ENCODE measurements at regions of chr15 and their contacts with region 1.

Region 1: GRCh38 chr15:29821416-29822131 is 694 bp downstream of the TJP1 start:
- DNase-seq: peak in 5 of 9 experiments; percentile 13 to 48 (median 27)
- ATAC-seq: peak; percentile 44
- H3K4me3 ChIP-seq: peak overlapping the region in 1 of 2 experiments; percentile 12
- H3K4me3 Mint-ChIP-seq: peak overlapping the region; percentile 54
- H3K27ac ChIP-seq: no peak overlapping the region
- H3K27ac Mint-ChIP-seq: no peak overlapping the region
- H3K4me1 ChIP-seq: peaks cover 34% of the 10 kb centered on the region
- H3K4me1 Mint-ChIP-seq: peaks cover 23% of the 10 kb centered on the region
- H3K27me3 ChIP-seq: peaks cover 29 to 39% of the 10 kb centered on the region in 2 experiments
- H3K27me3 Mint-ChIP-seq: peaks cover 53% of the 10 kb centered on the region
- CTCF ChIP-seq: no peak

Region 2: DNA sequence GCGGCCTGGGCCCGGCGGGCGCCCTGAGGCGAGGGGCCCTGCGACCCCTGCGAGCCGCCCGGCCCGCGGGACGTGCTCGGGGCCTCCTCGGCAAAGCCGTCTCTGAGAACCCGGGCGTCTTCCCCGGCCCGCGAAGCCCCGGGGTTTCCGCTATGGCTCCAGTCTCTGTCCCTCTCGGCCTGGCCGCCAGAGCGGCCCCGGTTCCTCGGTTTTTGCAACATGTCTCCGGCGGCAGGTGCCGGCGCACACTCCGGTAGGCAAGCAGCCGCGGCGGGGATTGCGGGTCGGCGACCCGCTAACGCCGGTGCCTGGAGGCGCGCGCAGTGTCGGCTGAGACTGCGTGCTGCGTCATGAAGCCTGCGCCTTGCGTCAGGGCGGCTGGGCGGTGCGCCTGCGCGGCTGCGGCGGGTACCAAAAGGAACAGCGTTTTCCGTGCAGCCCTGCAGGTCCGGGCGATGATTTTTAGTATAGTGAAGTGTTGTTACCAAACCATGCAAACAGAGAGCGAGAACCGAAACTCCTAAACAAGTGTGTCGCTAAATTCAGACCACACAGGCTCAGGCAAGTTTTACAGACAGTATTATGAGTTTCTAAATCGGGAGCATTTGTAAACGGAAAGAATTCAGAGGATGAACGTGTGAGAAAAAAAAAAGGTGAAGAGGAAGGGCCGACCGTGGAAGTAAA is 551.9 kb before region 1 on chr15 and contains the start of gene NSMCE3:
- CTCF ChIA-PET with region 1: no interaction called
- POLR2A ChIA-PET with region 1: no interaction called
- intact Hi-C with region 1: loop called in 1 of 2 experiments (anchors 10 kb)
- DNase-seq: peak; percentile 85 to 96 (median 91)
- ATAC-seq: peak; percentile 81
- H3K4me3 ChIP-seq: peak within 1 kb of the TSS; percentile 71 to 79
- H3K4me3 Mint-ChIP-seq: peak within 1 kb of the TSS; percentile 96
- H3K27ac ChIP-seq: peak within 1 kb of the TSS; percentile 96 to 98
- H3K27ac Mint-ChIP-seq: peak within 1 kb of the TSS; percentile 99
- H3K4me1 ChIP-seq: peaks cover 35% of the 10 kb centered on the region
- H3K4me1 Mint-ChIP-seq: peaks cover 54% of the 10 kb centered on the region
- H3K27me3 ChIP-seq: no peaks in the 10 kb centered on the region
- H3K27me3 Mint-ChIP-seq: no peaks in the 10 kb centered on the region
- CTCF ChIP-seq: no peak
- total RNA-seq, gene NSMCE3: 48.5 to 50.5 TPM